ENCODE measurements at regions of chr3 and their contacts with region 1.

Region 1: GRCh38 chr3:159804726-159805410 is 183.8 kb upstream of the IL12A start:
- DNase-seq: peak; percentile 81
- H3K4me3 ChIP-seq: no peak overlapping the region
- CTCF ChIP-seq: peak; percentile 98

Region 2: DNA sequence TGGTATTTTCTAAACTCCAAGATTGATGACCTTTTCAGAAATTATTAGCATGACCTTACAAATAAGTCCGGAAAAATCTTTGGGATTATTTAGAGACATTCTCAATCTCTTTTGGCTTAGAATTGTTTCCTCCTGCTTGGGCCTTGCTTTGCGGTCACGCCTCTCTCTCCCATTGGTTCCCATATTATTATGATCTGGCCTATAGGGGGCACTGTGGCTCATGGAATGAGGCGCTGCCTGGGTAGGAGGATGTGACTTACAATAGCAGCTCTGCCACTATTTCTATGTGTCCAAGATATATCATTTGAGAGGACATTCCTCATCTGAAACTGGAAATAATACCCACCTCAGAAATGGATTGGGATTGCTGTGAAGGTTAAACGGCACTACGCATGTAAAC is 538.1 kb before region 1 on chr3:
- in situ Hi-C with region 1: loop called (anchors 5 kb)
- DNase-seq: no peak
- H3K4me3 ChIP-seq: no peak overlapping the region
- CTCF ChIP-seq: no peak